SK-N-SH (cell line): ENCODE measurements at regions of chr10 and their contacts with region 1.

Region 1: DNA sequence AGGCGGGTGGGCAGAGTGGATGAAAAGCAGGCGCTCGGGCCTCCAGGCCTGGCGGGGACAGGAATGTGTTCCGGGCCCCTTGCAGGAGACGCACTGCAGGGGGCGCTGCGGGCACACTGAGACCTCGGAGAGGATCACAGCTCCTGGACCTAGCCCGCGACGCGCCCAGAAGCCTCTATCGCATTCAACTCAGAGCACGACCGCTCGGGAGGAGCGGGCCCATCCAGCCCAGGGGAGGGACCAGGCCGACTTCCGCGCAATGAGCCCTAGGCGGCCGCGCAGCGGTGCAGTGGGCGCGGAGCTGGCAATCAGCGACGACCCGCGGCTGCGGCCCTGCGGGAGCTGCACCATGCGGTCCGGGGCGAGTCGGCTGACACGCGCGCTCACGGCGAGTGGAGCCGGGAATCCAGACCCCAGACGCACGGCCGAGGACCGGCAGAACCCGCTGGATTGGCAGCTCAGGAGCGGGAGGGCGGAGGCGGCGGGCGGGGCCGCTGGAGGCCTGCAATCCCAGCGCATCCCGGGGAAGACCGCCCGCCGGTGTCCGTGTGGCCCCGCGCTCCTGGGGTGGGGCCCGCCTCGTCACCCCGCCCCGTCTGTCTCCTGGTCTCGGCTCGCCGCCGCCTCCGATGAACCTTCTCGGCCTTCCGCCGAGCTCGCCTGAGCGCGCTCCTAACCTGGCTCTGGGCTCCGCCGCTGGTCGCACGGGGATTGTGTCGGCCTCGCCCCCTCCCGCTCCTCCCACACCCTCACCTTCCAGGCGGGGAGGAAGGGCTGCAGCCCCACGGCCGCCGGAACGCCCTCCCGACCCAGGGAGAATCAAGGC is 33.5 kb upstream of the GRID1 start:
- DNase-seq: peak; percentile 95
- H3K4me3 ChIP-seq: peak overlapping the region; percentile 72 to 77
- H3K27ac ChIP-seq: peak overlapping the region; percentile 60 to 81
- H3K4me1 ChIP-seq: peaks cover 0 to 16% of the 10 kb centered on the region in 2 experiments; a peak in 3 of 4 replicates
- H3K27me3 ChIP-seq: no peaks in the 10 kb centered on the region; the same call in 1 of the 2 replicates
- CTCF ChIP-seq: peak; percentile 86
- EP300 ChIP-seq: no peak
- RAD21 ChIP-seq: peak; percentile 86

Region 2: GRCh38 chr10:86355571-86356038 is 44.5 kb before region 1 on chr10:
- CTCF ChIA-PET with region 1: no interaction called
- POLR2A ChIA-PET with region 1: no interaction called
- DNase-seq: no peak
- H3K4me3 ChIP-seq: no peak overlapping the region
- H3K27ac ChIP-seq: no peak overlapping the region
- H3K4me1 ChIP-seq: peaks cover 0 to 7% of the 10 kb centered on the region in 2 experiments; a peak in 1 of 4 replicates
- H3K27me3 ChIP-seq: no peaks in the 10 kb centered on the region
- CTCF ChIP-seq: no peak
- EP300 ChIP-seq: no peak
- RAD21 ChIP-seq: no peak

Region 3: DNA sequence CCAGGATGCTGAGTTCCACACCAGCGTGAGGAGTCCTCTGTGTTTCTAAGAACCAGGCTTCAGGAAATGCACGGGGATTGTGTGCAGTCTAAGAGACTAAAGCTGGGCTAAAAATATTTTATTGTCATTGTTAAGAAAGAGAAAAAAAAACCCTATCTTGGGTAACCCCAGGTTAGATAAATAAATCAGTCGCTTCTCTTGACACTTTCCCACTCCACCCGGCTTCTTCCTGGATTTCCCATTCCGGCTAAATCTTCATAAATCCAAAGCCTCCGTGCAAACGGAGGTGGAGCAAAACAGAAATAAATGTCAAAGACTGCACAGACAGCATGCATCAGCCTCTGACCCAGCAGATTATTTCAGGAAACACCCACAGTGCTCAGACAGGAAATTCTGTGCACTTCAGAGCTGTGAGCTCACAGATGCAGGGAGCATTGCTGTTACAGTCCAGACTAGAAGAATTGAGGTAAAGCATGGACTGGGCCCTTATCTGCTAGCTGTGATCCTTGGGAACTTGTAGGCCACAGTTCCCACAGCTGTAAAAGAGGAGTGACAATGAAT is 11.3 kb after region 1 on chr10:
- CTCF ChIA-PET with region 1: interaction called, 21 read pairs
- POLR2A ChIA-PET with region 1: no interaction called
- DNase-seq: no peak
- H3K4me3 ChIP-seq: no peak overlapping the region
- H3K27ac ChIP-seq: peak overlapping the region; percentile 52 to 54
- H3K4me1 ChIP-seq: peaks cover 0 to 13% of the 10 kb centered on the region in 2 experiments; a peak in 1 of 4 replicates
- H3K27me3 ChIP-seq: no peaks in the 10 kb centered on the region
- CTCF ChIP-seq: no peak
- EP300 ChIP-seq: no peak
- RAD21 ChIP-seq: no peak

Region 4: DNA sequence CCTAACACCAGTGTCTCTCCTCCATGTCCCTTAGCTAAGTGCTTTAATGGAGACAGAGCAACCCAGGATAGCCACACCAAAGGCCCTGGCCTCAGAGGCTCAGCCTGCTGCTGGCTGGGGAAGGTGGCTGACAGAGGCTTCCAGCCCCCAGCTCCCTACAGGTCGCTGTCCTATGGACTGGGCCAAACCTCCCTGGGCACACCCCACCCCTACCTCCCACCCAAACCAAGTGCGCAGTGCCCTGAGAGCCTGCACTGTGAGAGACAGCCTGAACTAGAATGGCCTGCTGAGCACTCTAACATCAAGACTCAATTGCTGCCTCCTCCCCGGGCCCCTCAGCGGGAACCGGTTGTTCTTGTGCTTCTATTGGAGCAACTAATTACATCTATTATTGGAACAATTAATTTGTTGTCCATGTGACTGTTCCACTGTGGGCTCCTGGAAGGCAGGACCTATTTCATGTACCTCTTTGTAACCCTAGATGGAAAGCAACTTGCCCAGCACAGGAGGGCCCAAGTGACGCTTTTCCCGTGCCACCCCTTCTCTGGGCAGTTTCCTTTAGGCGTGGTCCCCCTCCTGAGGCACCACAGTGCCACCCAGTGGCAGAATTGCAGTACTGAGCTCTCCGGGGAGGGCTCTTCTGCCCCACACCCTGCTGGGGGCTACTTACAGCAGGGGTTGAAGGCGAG is 185.1 kb after region 1 on chr10:
- CTCF ChIA-PET with region 1: interaction called, 92 read pairs
- POLR2A ChIA-PET with region 1: interaction called, 4 read pairs
- DNase-seq: peak; percentile 86
- H3K4me3 ChIP-seq: peak overlapping the region in 1 of 2 experiments; percentile 48; a peak in 1 of 4 replicates
- H3K27ac ChIP-seq: no peak overlapping the region
- H3K4me1 ChIP-seq: no peaks in the 10 kb centered on the region; a peak in 1 of 4 replicates
- H3K27me3 ChIP-seq: no peaks in the 10 kb centered on the region
- CTCF ChIP-seq: peak; percentile 98
- EP300 ChIP-seq: no peak
- RAD21 ChIP-seq: peak; percentile 90

Region 5: DNA sequence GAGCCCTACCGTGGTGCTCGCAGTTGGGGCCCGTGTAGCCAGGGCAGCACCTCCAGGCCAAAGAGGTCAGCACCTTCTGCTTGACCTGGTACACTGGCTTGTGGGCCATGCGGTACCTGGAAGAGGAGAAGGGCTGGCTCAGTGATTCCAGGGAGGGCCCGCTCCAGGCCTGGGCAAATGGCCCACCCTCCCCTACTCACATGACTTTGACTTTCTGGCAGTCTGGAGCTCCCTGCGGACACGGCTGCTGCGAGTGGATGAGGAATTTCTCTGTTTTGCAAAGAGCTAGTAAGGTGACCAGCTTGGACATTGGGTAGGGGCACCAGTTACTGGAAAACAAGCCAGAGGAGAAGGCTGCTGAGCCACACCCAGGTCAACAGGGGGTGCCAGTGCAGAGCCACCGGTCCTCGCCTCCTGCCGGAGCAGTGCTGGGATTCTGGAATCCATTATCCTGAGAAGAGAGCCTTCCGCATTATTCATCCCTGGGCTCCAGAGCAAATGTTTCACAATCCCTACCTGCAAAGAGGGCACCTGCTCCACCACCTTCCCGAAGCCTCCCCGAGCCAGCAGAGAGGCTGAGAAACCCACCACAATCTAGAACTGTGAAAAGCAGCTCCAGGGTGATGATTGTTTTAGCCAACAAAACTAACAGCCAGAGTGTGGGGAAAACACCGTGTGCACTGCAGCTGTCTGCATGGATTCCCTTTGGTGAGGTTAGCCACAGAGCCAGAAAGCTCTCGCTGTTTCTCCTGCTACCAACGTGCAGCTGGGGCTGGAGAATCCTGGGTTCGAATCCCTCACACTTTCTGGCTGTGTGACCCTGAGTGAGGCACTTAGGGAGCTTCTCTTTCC is 545.5 kb after region 1 on chr10:
- CTCF ChIA-PET with region 1: no interaction called
- POLR2A ChIA-PET with region 1: no interaction called
- DNase-seq: peak; percentile 68
- H3K4me3 ChIP-seq: no peak overlapping the region
- H3K27ac ChIP-seq: no peak overlapping the region; a peak in 1 of 4 replicates
- H3K4me1 ChIP-seq: peaks cover 0 to 18% of the 10 kb centered on the region in 2 experiments; a peak in 1 of 4 replicates
- H3K27me3 ChIP-seq: no peaks in the 10 kb centered on the region
- CTCF ChIP-seq: peak; percentile 27
- EP300 ChIP-seq: no peak
- RAD21 ChIP-seq: peak; percentile 59